Posterior vena cava (tissue), 2 donors: ENCODE measurements at regions of chr10 and their contacts with region 1.

Region 1: GRCh38 chr10:130836344-130836743 is 475.2 kb downstream of the TCERG1L start:
- DNase-seq: no peak

Region 2: GRCh38 chr10:130790339-130790738 is 46.0 kb before region 1 on chr10:
- intact Hi-C with region 1: loop called in 1 of 2 experiments (anchors 1 kb)
- DNase-seq: no peak